ENCODE measurements at regions of chr6 and their contacts with region 1.

Region 1: DNA sequence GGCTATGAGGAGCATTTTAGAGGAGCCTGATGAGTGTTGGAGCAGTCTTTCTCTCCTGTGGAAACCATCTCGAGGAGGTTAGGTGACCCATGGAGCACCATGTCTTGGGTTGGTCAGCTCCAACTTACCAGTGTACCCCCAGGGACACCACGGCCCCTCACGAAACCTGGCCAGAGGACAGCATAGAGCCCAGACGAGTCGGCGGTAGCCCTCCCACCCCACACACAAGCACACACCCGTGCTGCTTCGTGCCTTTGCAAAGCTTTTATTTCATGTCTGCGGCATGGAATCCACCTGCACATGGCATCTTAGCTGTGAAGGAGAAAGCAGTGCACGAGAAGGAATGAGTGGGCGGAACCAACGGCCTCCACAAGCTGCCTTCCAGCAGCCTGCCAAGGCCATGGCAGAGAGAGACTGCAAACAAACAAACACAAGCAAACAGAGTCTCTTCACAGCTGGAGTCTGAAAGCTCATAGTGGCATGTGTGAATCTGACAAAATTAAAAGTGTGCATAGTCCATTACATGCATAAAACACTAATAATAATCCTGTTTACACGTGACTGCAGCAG is 53.6 kb downstream of the EZR start:
- DNase-seq: no peak
- H3K27ac ChIP-seq: 0 out of 2 replicates have a peak overlapping the region, but pooled peaks have one; percentile 50
- CTCF ChIP-seq: no peak

Region 2: DNA sequence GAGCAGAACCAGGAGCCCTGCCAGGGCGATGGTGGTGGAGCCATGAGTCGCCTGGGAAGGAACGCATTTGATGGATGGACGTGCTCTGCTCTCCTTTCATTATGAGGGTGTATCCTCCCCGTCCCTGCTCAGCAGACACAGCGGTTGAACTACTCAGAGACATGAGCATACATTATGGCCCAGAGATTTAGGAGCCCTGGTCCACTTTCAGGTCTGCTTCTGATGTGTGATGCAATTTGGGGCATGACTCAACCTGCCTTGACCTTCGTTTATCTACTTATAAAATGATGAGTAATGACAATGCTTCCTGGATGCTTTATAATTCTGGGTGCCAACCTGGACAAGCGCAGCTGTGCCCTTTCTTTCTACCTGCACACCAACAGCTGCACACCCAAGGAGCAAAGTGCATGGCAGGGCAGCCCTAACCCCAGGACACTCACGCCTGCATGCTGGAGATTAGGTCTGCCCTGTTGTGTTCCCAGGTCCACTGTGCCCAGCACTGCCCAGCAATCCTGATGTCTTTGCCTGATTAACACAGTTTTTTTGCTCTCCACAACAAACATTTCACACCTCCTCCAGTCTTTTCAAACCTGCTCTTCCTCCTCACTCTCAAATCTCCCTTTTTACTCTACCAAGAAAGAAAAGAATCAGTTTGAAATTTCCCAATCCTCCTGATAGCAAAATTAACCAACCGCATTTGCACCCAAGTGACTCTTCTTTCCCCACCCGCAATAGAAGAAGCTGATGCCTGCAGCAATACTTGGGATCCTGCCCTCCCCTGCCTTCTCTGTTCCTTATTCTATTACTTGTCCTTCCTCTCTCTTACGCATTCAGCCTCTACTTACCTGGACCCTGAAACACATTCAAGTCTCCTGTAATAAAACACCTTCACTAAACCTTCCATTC is 27.6 kb before region 1 on chr6:
- CTCF ChIA-PET with region 1: no interaction called
- POLR2A ChIA-PET with region 1: no interaction called
- DNase-seq: peak; percentile 82
- H3K27ac ChIP-seq: peak overlapping the region; percentile 89
- CTCF ChIP-seq: no peak

Region 3: GRCh38 chr6:158869826-158870648 is 104.5 kb after region 1 on chr6:
- CTCF ChIA-PET with region 1: no interaction called
- POLR2A ChIA-PET with region 1: interaction called, 10 read pairs
- DNase-seq: peak; percentile 99
- H3K27ac ChIP-seq: peak overlapping the region; percentile 96
- CTCF ChIP-seq: no peak